Activated CD4-positive, alpha-beta T cell treated with anti-CD3 and anti-CD28 coated beads for 36 hours (primary cell): ENCODE measurements at regions of chr7 and their contacts with region 1.

Region 1: DNA sequence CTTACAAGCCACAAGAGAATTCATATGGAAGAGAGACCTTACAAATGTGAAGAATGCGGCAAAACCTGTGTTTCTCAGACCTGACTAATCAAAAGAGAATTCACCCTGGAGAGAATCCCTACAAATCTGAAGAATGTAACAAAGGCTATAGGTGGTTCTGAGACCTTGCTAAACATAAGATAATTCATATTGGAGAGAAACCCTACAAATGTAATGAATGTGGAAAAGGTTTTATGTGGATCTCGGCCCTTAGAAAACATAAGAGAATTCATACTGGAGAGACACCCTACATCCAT is 33.4 kb downstream of the ZNF727 start:
- DNase-seq: no peak
- ATAC-seq: no peak
- H3K4me3 Mint-ChIP-seq: no peak overlapping the region
- H3K27ac Mint-ChIP-seq: no peak overlapping the region
- H3K4me1 Mint-ChIP-seq: no peaks in the 10 kb centered on the region
- H3K27me3 Mint-ChIP-seq: no peaks in the 10 kb centered on the region

Region 2: GRCh38 chr7:63876707-63877322 is 201.8 kb before region 1 on chr7:
- CTCF ChIA-PET with region 1: no interaction called
- POLR2A ChIA-PET with region 1: no interaction called
- intact Hi-C with region 1: loop called in 1 of 2 experiments (anchors 10 kb)
- DNase-seq: no peak
- ATAC-seq: no peak
- H3K4me3 Mint-ChIP-seq: no peak overlapping the region
- H3K27ac Mint-ChIP-seq: no peak overlapping the region
- H3K4me1 Mint-ChIP-seq: no peaks in the 10 kb centered on the region
- H3K27me3 Mint-ChIP-seq: no peaks in the 10 kb centered on the region

Region 3: GRCh38 chr7:64099656-64100531 is 21.2 kb after region 1 on chr7:
- CTCF ChIA-PET with region 1: no interaction called
- POLR2A ChIA-PET with region 1: no interaction called
- intact Hi-C with region 1: no loop called
- DNase-seq: no peak
- ATAC-seq: no peak
- H3K4me3 Mint-ChIP-seq: no peak overlapping the region
- H3K27ac Mint-ChIP-seq: no peak overlapping the region
- H3K4me1 Mint-ChIP-seq: no peaks in the 10 kb centered on the region
- H3K27me3 Mint-ChIP-seq: no peaks in the 10 kb centered on the region

Region 4: DNA sequence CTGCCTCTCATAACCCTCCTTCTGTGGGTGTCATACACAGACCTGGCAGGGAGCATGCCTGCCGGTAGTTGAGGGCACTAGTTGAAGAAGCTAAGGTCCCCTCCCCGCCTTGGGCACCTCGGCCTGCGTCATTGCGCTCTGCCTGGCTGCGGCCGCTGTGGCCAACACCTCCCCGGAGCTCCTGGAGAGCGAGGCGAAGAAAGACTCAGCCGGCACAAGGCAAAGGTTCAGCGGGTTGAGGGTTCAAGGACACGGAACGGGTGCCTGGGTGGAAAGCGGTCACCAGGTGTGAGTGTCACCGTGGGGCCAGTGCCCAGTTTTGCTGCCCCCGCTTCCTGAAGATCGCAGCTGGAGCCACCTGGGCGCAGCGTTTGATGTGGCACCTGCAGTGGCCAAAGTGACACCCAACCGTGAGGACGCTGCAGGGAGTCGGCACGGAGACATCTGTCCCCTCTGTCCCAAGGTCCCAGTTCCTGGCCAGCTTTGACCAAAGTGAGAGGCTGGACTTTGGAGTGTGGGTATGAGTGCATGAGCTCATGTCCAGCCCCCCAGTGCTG is 113.6 kb after region 1 on chr7:
- CTCF ChIA-PET with region 1: no interaction called
- POLR2A ChIA-PET with region 1: no interaction called
- intact Hi-C with region 1: no loop called
- DNase-seq: no peak
- ATAC-seq: no peak
- H3K4me3 Mint-ChIP-seq: no peak overlapping the region
- H3K27ac Mint-ChIP-seq: no peak overlapping the region
- H3K4me1 Mint-ChIP-seq: no peaks in the 10 kb centered on the region
- H3K27me3 Mint-ChIP-seq: no peaks in the 10 kb centered on the region

Region 5: DNA sequence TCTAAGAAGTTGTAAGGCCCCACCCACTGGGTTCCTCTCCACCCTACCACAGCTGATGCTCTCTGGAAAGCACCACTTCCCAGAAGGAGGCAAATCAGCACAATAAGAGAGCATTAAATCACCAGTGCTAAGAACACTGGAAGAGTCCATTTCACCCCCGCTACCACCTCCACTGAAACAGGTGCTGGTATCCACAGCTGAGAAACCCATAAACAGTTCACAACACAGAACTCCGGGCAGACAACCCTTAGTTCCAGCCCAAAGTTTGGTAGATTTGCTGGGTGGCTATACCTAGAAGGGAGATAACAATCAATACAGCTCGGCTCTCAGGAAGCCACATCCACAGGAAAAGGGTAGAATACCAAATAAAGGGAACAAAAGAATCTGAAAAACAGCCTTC is 450.1 kb after region 1 on chr7:
- CTCF ChIA-PET with region 1: no interaction called
- POLR2A ChIA-PET with region 1: no interaction called
- intact Hi-C with region 1: loop called in 1 of 2 experiments (anchors 10 kb)
- DNase-seq: no peak
- ATAC-seq: no peak
- H3K4me3 Mint-ChIP-seq: no peak overlapping the region
- H3K27ac Mint-ChIP-seq: no peak overlapping the region
- H3K4me1 Mint-ChIP-seq: no peaks in the 10 kb centered on the region
- H3K27me3 Mint-ChIP-seq: no peaks in the 10 kb centered on the region